B cell (primary cell): ENCODE measurements at regions of chrX and their contacts with region 1.

Region 1: DNA sequence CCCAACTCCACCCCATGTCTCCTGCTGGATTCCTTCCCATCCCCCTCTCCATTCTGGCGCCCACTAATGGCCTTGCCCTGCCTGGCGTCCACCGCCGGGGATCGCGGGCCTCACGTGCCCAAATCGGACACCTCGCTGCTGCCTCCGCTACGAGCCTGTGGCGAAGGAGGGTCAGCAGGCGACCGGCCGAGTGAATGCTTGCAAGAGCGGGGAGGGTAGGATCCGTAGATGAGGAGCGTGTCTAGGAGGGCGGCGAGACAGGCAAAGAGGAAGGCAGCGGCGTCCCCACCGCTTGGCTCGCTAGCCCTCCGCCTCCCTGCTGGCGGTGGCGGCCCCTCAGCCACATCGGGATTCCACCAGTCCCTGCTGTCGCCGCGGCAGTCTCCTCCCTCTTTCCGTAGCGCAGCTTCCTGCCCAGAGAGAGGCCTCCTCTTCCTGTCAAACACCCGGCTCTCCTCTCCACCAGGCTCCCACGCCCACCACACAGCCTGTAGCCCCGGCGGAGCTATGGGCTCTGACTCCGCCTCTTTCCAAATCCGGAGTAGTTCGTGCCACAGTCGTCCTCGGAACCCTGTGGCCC is at the start of gene SPIN2B:
- DNase-seq: peak; percentile 78
- ATAC-seq: peak; percentile 98
- H3K4me3 ChIP-seq: peak within 1 kb of the TSS in 4 of 5 experiments; percentile 54 to 61 (median 57)
- H3K4me3 Mint-ChIP-seq: peak within 1 kb of the TSS; percentile 95
- H3K27ac ChIP-seq: peak within 1 kb of the TSS; percentile 22 to 61
- H3K27ac Mint-ChIP-seq: peak within 1 kb of the TSS; percentile 89
- H3K4me1 ChIP-seq: peaks cover 4 to 7% of the 10 kb centered on the region in 2 donors
- H3K4me1 Mint-ChIP-seq: peaks cover 25% of the 10 kb centered on the region
- H3K27me3 ChIP-seq: no peaks in the 10 kb centered on the region
- H3K27me3 Mint-ChIP-seq: no peaks in the 10 kb centered on the region
- CTCF ChIP-seq: no peak
- total RNA-seq, gene SPIN2B: 23.5 and 29.7 TPM in 2 replicates

Region 2: GRCh38 chrX:56813318-56813837 is 307.9 kb before region 1 on chrX:
- CTCF ChIA-PET with region 1: no interaction called
- POLR2A ChIA-PET with region 1: no interaction called
- intact Hi-C with region 1: loop called (anchors 5 kb)
- DNase-seq: peak; percentile 36
- ATAC-seq: peak; percentile 42
- H3K4me3 ChIP-seq: peak overlapping the region in 2 of 5 experiments; percentile 42 to 58
- H3K4me3 Mint-ChIP-seq: peak overlapping the region; percentile 76
- H3K27ac ChIP-seq: peak overlapping the region; percentile 82 to 86
- H3K27ac Mint-ChIP-seq: peak overlapping the region; percentile 84
- H3K4me1 ChIP-seq: peaks cover 32 to 35% of the 10 kb centered on the region in 2 donors
- H3K4me1 Mint-ChIP-seq: peaks cover 67% of the 10 kb centered on the region
- H3K27me3 ChIP-seq: no peaks in the 10 kb centered on the region
- H3K27me3 Mint-ChIP-seq: no peaks in the 10 kb centered on the region
- CTCF ChIP-seq: no peak

Region 3: DNA sequence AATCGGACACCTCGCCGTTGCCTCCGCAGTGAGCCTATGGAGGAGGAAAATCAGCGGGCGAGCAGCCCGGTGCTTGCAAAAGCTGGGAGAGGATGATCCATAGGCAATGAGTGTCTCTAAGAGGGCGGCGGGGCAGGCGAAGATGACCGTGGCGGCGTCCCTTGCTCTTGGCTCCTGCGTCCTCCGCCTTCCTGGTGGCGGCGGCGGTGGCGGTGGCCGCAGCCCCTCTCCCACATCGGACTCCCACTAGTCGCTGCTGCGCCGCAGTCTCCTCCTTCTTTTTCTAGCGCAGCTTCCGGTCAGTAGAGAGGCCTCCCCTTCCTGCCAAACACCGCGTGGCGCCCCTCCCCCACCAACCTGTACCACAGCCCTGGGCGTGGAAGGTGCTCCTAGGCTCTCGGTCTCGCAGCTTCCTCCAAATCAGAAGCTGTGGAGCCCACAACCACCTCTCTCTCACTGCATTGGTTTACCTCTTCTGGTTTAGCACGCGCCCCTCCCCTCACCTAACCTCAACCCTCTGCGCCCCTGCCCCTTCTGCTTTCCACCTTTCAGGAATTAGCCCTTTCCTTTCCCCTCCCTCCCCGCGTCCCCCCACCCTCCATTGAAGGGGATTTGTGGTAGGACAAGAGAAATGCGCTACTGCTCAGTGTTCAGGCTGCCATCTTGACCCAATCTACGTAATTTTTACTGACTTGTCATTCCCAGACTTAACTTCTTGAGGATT is 125.8 kb before region 1 on chrX and contains the start of gene SPIN3:
- CTCF ChIA-PET with region 1: no interaction called
- POLR2A ChIA-PET with region 1: no interaction called
- intact Hi-C with region 1: loop called (anchors 1 kb)
- DNase-seq: peak; percentile 55
- ATAC-seq: peak; percentile 80
- H3K4me3 ChIP-seq: peak within 1 kb of the TSS in 4 of 5 experiments; percentile 48 to 58 (median 52)
- H3K4me3 Mint-ChIP-seq: peak within 1 kb of the TSS; percentile 96
- H3K27ac ChIP-seq: peak within 1 kb of the TSS; percentile 41 to 55
- H3K27ac Mint-ChIP-seq: peak within 1 kb of the TSS; percentile 92
- H3K4me1 ChIP-seq: peaks cover 3% of the 10 kb centered on the region in 2 donors
- H3K4me1 Mint-ChIP-seq: peaks cover 29% of the 10 kb centered on the region
- H3K27me3 ChIP-seq: peaks cover 0 to 5% (median 0%) of the 10 kb centered on the region in 4 experiments
- H3K27me3 Mint-ChIP-seq: no peaks in the 10 kb centered on the region
- CTCF ChIP-seq: no peak
- total RNA-seq, gene SPIN3: 19.4 and 20.6 TPM in 2 replicates

Region 4: DNA sequence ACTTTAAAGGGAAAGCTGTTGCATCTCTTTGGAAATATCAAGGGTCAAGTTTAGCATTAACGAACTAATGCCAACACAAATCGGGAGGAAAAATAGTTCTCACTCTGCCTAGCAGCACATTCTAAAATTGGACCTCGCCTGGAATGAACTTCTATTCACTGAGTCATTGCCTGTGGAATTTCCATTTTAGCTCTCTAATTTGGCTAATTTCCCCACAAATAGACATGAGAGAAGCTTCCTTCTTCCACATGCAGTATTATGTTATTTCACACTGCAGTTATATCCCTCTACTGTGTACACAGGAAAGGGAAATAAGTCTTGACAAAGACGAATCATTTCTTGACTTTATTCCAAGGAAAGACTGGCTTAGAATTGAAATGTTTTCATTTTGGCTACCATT is 779.7 kb after region 1 on chrX:
- CTCF ChIA-PET with region 1: no interaction called
- POLR2A ChIA-PET with region 1: no interaction called
- intact Hi-C with region 1: loop called (anchors 10 kb)
- DNase-seq: no peak
- ATAC-seq: no peak
- H3K4me3 ChIP-seq: no peak overlapping the region
- H3K4me3 Mint-ChIP-seq: no peak overlapping the region
- H3K27ac ChIP-seq: no peak overlapping the region
- H3K27ac Mint-ChIP-seq: no peak overlapping the region
- H3K4me1 ChIP-seq: no peaks in the 10 kb centered on the region
- H3K4me1 Mint-ChIP-seq: peaks cover 19% of the 10 kb centered on the region
- H3K27me3 ChIP-seq: no peaks in the 10 kb centered on the region
- H3K27me3 Mint-ChIP-seq: no peaks in the 10 kb centered on the region
- CTCF ChIP-seq: no peak